ENCODE measurements at regions of chr2 and their contacts with region 1.

Region 1: DNA sequence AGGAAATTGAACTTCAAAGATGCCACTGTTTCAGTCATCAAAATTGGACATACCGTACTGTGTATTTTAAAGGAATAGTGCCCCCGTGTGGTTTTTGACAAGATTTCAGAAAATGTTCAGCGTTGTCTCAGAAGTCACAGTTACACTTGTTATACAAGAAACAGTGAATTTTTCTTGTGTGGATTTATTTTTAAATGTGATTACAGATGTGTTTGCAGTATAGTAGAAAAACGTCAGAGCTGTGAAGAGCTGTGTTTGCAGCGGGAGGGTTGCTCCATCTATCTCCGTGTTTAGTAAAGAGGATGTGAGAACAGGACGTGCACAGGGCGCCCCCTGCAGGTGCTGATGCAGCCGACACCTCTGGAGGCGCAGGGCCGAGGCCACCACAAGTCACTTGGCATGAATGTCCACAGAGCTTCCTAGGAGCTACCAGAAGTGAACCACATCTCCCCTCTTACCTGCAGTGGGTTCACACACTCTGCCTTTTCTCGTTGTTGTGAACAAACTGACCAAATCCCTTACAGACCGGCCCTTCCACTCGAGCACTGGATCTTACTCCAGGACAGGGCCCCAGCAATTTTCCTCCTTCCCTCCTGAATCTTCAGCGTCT is 73.1 kb downstream of the CACNB4 start:
- DNase-seq: peak; percentile 75
- ATAC-seq: peak; percentile 99
- H3K4me3 ChIP-seq: peak overlapping the region; percentile 29 to 48
- H3K27ac ChIP-seq: no peak overlapping the region
- H3K4me1 ChIP-seq: no peaks in the 10 kb centered on the region
- H3K27me3 ChIP-seq: peaks cover 5% of the 10 kb centered on the region
- CTCF ChIP-seq: peak; percentile 99

Region 2: GRCh38 chr2:151792589-151792988 is 233.2 kb before region 1 on chr2:
- CTCF ChIA-PET with region 1: no interaction called
- POLR2A ChIA-PET with region 1: no interaction called
- in situ Hi-C with region 1: no loop called
- intact Hi-C with region 1: loop called (anchors 10 kb)
- DNase-seq: no peak
- ATAC-seq: no peak
- H3K4me3 ChIP-seq: no peak overlapping the region
- H3K27ac ChIP-seq: no peak overlapping the region
- H3K4me1 ChIP-seq: no peaks in the 10 kb centered on the region
- H3K27me3 ChIP-seq: no peaks in the 10 kb centered on the region
- CTCF ChIP-seq: peak; percentile 32

Region 3: DNA sequence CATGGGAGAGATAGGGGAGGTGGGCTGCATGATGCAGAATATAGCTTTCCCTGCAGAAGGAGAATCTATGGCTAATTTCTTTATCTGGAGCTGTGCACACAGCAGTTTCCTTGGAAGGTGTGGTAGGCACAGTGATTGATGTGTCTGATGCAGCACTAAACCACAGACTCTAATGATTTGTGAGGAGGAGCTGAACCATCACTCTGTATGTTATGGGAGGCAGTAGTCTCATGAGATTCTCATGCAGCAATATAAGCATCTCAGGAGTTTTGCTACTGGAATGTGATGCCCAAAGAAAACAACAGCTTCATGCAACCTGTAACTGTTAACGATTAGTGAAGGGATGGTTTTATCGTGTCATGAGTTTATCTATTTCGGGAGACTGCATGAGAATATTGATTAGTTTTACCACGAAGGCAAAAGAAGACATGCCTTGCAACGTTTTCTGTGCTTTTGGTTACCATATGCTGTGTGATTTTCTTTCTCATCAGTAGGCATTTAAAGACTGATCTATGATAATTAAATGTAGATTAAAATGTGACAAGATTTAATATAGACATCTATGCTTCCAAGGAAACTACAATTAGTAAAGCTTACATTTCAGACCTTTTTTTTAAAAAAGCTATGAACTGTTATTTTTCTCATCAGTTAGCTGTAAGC is 979.4 kb after region 1 on chr2:
- CTCF ChIA-PET with region 1: no interaction called
- POLR2A ChIA-PET with region 1: no interaction called
- in situ Hi-C with region 1: no loop called
- intact Hi-C with region 1: no loop called
- DNase-seq: no peak
- ATAC-seq: no peak
- H3K4me3 ChIP-seq: no peak overlapping the region
- H3K27ac ChIP-seq: no peak overlapping the region
- H3K4me1 ChIP-seq: no peaks in the 10 kb centered on the region
- H3K27me3 ChIP-seq: no peaks in the 10 kb centered on the region
- CTCF ChIP-seq: no peak

Measured in Panc1 (cell line).